ENCODE measurements at regions of chr13 and their contacts with region 1.

Region 1: GRCh38 chr13:39263033-39263432 is 224.8 kb downstream of the NHLRC3 start:
- DNase-seq: peak; percentile 35 to 83 (median 47)
- H3K4me3 ChIP-seq: no peak overlapping the region
- H3K27ac ChIP-seq: no peak overlapping the region
- H3K4me1 ChIP-seq: peaks cover 0 to 6% of the 10 kb centered on the region in 2 donors
- H3K27me3 ChIP-seq: no peaks in the 10 kb centered on the region
- CTCF ChIP-seq: peak; percentile 56 to 75 (median 66)
- POLR2A ChIP-seq: no peak

Region 2: DNA sequence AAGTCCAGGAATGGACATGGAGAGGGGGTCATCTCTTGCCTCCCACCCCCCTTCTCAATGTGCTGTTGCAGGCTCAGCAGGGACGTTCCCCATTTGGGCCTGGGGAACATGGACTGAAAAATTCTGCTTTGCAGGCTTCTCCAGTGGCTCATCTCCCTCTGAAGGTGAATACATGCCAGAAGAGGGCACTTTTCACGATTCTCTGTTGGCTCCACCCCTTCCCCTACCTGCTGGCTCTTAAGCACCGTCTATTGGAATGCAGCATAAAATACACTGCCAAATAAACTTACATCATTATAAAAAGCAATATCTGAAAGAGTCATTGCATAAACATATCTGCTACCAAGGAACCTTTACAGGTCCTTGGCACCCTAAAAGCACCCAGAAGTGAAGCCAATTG is 189.0 kb before region 1 on chr13:
- intact Hi-C with region 1: no loop called
- DNase-seq: no peak
- H3K4me3 ChIP-seq: no peak overlapping the region
- H3K27ac ChIP-seq: no peak overlapping the region
- H3K4me1 ChIP-seq: no peaks in the 10 kb centered on the region
- H3K27me3 ChIP-seq: no peaks in the 10 kb centered on the region
- CTCF ChIP-seq: no peak
- POLR2A ChIP-seq: no peak

Region 3: GRCh38 chr13:39144941-39145533 is 118.0 kb before region 1 on chr13:
- intact Hi-C with region 1: loop called in 1 of 2 experiments (anchors 5 kb)
- DNase-seq: peak; percentile 45 to 82 (median 62)
- H3K4me3 ChIP-seq: peak overlapping the region in 1 of 4 donors; percentile 40
- H3K27ac ChIP-seq: no peak overlapping the region
- H3K4me1 ChIP-seq: no peaks in the 10 kb centered on the region
- H3K27me3 ChIP-seq: no peaks in the 10 kb centered on the region
- CTCF ChIP-seq: peak; percentile 36 to 76 (median 66)
- POLR2A ChIP-seq: no peak